Common myeloid progenitor, CD34-positive (primary cell): ENCODE measurements at regions of chr15 and their contacts with region 1.

Region 1: GRCh38 chr15:37095770-37096557 is 4.4 kb downstream of the MEIS2 start:
- DNase-seq: no peak
- H3K4me3 ChIP-seq: no peak overlapping the region
- H3K27ac ChIP-seq: no peak overlapping the region
- H3K4me1 ChIP-seq: peaks cover 0 to 28% (median 20%) of the 10 kb centered on the region in 4 experiments
- H3K27me3 ChIP-seq: peaks cover 30 to 96% (median 61%) of the 10 kb centered on the region in 5 experiments

Region 2: DNA sequence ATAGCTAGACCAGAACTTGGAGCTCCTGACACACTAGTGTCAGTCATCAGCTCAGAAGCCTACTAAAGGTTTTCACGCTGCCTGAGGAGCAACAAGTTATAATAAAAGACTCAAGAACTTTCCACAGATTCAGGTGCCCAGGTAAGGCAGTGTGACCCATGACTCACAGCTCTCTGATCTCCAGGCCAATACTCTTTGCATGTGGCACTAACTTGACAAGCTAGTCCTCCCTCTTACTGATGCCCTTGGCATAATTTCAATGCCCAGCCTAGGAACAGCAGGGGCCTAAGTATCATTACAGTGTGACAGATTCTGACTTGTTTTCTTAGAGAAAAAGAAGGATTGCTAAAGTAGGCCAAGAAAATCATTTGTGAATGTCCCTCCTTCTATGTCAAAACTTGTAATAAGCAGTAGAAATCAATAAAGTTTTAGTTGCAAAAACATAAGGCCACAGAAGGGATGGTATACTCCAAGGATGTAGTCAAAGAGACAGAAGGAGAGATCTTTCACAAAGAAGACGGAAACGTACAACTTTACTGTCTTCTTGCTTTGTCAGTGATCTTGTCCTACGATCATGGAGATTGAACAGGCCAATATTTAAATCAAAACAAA is 33.9 kb before region 1 on chr15:
- CTCF ChIA-PET with region 1: no interaction called
- POLR2A ChIA-PET with region 1: no interaction called
- DNase-seq: no peak
- H3K4me3 ChIP-seq: no peak overlapping the region
- H3K27ac ChIP-seq: no peak overlapping the region
- H3K4me1 ChIP-seq: no peaks in the 10 kb centered on the region
- H3K27me3 ChIP-seq: peaks cover 0 to 5% (median 0%) of the 10 kb centered on the region in 5 experiments

Region 3: DNA sequence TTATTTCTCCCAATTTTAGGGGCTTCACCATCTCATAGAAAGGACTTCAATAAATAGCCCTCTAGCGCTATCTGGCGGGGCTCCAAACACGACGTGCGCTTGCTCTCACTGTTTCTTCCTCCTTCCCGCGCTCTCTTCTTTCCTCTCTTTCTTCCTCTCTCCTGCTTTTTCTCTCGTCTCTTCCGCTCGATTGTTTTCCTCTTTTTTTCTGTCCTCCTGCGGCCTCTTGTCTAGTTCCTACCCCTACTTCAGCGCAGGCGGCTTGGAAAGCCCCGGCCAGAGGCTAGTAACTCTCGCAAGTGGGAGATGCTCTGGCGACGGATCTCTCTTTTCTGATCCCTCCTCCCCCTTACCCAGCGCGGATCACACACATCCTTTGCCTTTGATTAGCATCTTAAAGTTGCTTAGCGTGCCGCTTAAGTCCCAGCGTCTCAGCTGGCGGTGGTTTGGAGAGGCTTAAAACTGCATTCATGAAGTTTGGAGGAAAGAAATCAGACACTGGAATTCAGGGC is 10.6 kb after region 1 on chr15:
- CTCF ChIA-PET with region 1: interaction called, 10 read pairs
- POLR2A ChIA-PET with region 1: no interaction called
- DNase-seq: peak in 2 of 3 donors; percentile 61 to 66
- H3K4me3 ChIP-seq: no peak overlapping the region
- H3K27ac ChIP-seq: no peak overlapping the region
- H3K4me1 ChIP-seq: peaks cover 0 to 15% (median 10%) of the 10 kb centered on the region in 4 experiments
- H3K27me3 ChIP-seq: peaks cover 38 to 99% (median 76%) of the 10 kb centered on the region in 5 experiments